ENCODE measurements at regions of chr2 and their contacts with region 1.

Region 1: DNA sequence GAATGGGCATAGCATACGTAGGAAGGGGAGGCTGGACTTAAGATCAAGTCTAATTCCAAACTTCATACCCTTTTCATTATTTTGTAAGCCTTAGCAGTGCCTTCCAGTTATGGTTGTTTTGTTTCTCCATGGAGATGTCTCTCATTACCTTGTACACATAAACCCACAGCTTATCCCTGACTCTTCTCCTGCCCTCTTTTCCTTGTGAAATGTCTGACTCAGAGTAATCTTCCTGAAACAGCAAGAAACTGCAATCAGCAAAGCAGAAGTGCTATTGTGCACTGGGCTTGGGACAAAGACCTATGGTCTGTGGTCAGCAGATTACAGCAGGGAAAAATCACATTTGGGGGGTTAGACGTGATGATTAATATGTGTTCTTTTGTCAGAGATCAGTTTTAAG is 176.7 kb downstream of the IKZF2 start:
- DNase-seq: no peak
- H3K4me3 ChIP-seq: no peak overlapping the region
- H3K4me3 Mint-ChIP-seq: no peak overlapping the region
- H3K27ac Mint-ChIP-seq: no peak overlapping the region
- H3K4me1 ChIP-seq: peaks cover 12% of the 10 kb centered on the region
- H3K4me1 Mint-ChIP-seq: peaks cover 16% of the 10 kb centered on the region
- H3K27me3 ChIP-seq: no peaks in the 10 kb centered on the region
- H3K27me3 Mint-ChIP-seq: no peaks in the 10 kb centered on the region
- CTCF ChIP-seq: no peak

Region 2: DNA sequence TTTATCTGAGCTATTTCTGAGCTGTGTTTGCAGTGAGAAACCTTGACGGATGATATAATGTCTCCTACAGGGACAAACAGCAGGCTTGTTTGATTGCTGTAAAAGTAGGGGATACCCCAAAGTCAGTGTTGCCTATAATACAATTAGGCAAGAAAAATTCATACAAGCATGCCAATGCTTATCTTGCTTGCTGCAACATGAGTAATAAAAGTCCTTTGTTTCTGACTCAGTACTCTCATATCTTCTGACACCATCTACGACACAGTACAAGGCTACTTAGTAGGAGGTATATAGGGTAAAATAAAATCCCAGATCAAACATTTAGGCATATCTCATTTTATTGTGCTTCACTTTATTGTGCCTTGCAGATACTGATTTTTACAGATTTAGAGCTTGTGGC is 469.1 kb before region 1 on chr2:
- CTCF ChIA-PET with region 1: no interaction called
- POLR2A ChIA-PET with region 1: no interaction called
- intact Hi-C with region 1: no loop called
- DNase-seq: no peak
- H3K4me3 ChIP-seq: no peak overlapping the region
- H3K4me3 Mint-ChIP-seq: no peak overlapping the region
- H3K27ac Mint-ChIP-seq: no peak overlapping the region
- H3K4me1 ChIP-seq: no peaks in the 10 kb centered on the region
- H3K4me1 Mint-ChIP-seq: no peaks in the 10 kb centered on the region
- H3K27me3 ChIP-seq: no peaks in the 10 kb centered on the region
- H3K27me3 Mint-ChIP-seq: no peaks in the 10 kb centered on the region
- CTCF ChIP-seq: no peak

Region 3: GRCh38 chr2:212863185-212863588 is 111.5 kb before region 1 on chr2:
- CTCF ChIA-PET with region 1: no interaction called
- POLR2A ChIA-PET with region 1: no interaction called
- intact Hi-C with region 1: loop called (anchors 5 kb)
- DNase-seq: peak; percentile 64 to 70
- H3K4me3 ChIP-seq: no peak overlapping the region
- H3K4me3 Mint-ChIP-seq: no peak overlapping the region
- H3K27ac Mint-ChIP-seq: no peak overlapping the region
- H3K4me1 ChIP-seq: no peaks in the 10 kb centered on the region
- H3K4me1 Mint-ChIP-seq: no peaks in the 10 kb centered on the region
- H3K27me3 ChIP-seq: no peaks in the 10 kb centered on the region
- H3K27me3 Mint-ChIP-seq: no peaks in the 10 kb centered on the region
- CTCF ChIP-seq: peak; percentile 57 to 59

Region 4: DNA sequence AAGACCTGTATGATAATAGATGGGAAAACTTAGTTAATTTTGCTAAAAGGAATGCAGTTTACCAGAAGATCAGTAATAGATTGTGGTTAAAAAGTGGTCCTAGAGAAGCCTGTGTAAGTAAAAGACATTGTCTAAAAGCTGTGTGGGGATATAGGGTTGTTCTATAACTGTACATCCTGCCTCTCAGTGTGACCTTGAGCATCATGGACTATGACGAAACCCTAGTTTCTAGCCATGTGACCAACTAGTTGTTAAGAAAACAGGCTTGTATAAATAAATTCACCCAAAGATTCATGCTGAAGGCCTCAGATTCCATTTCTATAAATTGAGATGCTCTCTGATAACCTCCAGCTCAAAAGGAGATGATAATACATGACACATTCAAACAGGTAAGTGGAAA is 16.0 kb after region 1 on chr2:
- CTCF ChIA-PET with region 1: no interaction called
- POLR2A ChIA-PET with region 1: no interaction called
- intact Hi-C with region 1: no loop called
- DNase-seq: no peak
- H3K4me3 ChIP-seq: no peak overlapping the region
- H3K4me3 Mint-ChIP-seq: no peak overlapping the region
- H3K27ac Mint-ChIP-seq: no peak overlapping the region
- H3K4me1 ChIP-seq: no peaks in the 10 kb centered on the region
- H3K4me1 Mint-ChIP-seq: no peaks in the 10 kb centered on the region
- H3K27me3 ChIP-seq: no peaks in the 10 kb centered on the region
- H3K27me3 Mint-ChIP-seq: no peaks in the 10 kb centered on the region
- CTCF ChIP-seq: no peak